Left colon (tissue), 2 donors: ENCODE measurements at regions of chr12 and their contacts with region 1.

Region 1: DNA sequence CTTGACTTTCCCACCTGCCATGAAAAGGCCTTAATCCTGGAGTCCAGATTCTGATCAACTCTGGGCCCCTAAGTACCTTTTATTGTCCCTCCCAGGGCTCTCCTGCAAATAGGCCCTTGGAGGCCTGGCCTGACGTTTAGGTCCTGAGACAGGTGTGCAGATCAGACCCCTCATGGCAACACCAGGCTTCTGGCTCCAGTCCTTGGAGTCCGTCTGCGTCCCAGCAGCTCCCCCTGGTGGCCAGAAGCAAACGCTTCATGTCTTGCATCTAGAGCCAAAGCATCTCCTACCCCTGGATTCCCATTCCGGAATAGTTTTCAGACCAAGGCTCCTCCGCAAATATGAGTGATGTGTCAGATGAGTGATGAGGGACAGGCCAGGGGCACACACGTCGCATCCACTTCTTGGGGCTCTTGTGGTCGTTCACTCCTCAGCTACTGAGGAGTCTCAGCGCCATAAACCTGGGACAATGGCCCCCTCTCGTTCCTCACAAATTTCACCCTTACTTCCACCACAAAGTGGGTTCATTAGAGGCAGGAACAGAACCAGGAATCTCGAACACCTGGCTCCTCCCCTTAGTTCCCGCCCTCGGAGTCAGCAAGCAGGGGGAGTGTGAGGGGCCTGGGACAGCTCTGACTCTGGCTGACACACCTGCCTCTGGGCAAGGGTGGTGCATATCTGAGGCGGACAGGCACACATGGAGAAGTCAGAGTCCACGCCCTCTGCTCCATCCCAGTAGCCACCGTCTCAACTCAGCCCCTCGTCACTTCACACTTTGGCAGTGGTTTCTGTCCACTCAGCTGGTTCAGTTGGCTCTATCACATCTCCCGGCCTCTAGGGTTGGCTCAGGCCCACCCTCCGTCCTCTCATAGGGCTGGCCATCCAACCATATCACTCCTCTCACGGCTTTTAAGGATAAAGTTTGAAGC is 77.9 kb upstream of the PWP1 start:
- DNase-seq: peak; percentile 56 to 83
- ATAC-seq: peak; percentile 64

Region 2: DNA sequence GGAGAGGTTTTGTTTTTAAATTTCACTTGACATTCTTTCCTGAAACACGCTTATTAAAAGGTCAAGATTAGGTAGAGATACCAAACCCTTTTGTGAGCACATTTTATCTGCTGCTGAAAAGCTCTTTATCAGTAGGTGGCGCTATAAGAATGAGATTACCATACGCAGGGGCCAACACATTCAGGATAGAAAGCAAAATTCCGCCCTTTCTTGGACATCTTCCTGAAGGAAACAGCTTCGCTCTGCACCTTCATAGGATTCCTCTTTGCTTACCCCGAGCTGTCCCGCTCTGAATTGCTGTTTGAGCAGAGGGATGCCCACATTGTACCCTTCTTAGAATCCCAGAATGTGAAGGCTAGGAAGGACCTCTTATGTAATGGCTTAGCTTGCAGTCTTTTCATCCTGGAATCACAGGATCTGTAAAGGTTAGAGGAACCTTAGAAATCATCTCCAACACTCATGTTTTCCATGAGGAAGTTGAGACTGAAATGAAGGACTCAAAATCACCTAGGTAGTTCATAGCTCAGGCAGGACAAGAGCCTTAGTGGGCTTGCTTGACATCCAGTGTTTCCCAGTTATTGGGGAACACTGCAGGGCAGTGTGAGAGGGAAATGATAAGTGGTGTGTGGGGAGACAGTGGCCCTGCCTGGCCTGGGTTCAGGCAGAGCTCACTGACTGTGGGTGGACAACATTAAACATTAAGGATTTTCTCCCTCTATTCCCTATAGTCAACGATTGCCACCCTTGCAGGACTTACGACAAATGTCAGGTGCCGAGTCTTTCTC is 475.7 kb before region 1 on chr12:
- intact Hi-C with region 1: loop called (anchors 2 to 5 kb)
- DNase-seq: no peak
- ATAC-seq: peak; percentile 57